Calu3 (cell line): ENCODE measurements at regions of chr10 and their contacts with region 1.

Region 1: GRCh38 chr10:28241741-28242399 is 61.0 kb downstream of the MPP7 start:
- DNase-seq: peak; percentile 53
- H3K4me3 Mint-ChIP-seq: no peak overlapping the region
- H3K27ac Mint-ChIP-seq: no peak overlapping the region
- H3K4me1 Mint-ChIP-seq: no peaks in the 10 kb centered on the region
- H3K27me3 Mint-ChIP-seq: no peaks in the 10 kb centered on the region
- CTCF ChIP-seq: peak; percentile 82

Region 2: DNA sequence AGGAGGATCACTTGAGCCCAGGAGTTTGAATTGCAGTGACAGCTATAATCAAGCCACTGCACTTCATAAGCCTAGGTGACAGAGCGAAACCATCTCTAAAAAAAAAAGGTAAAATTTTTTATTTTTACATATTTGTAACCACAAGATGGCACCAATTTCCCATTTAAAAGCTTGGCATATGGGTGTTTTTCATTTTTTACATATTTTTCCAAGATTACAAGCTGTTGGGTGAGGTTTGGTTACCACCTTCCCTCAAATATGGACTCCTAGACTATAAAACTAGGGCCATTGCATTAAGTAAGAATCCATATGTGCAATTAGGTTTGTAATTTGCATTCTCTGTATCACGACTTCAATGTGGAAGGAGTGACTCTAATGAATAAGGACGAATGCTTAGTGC is 872.0 kb before region 1 on chr10:
- CTCF ChIA-PET with region 1: interaction called, 3 read pairs
- intact Hi-C with region 1: loop called (anchors 2 kb)
- DNase-seq: no peak
- H3K4me3 Mint-ChIP-seq: no peak overlapping the region
- H3K27ac Mint-ChIP-seq: no peak overlapping the region
- H3K4me1 Mint-ChIP-seq: peaks cover 9% of the 10 kb centered on the region
- H3K27me3 Mint-ChIP-seq: no peaks in the 10 kb centered on the region
- CTCF ChIP-seq: peak; percentile 17

Region 3: GRCh38 chr10:27558612-27559020 is 683.3 kb before region 1 on chr10:
- CTCF ChIA-PET with region 1: interaction called, 3 read pairs
- intact Hi-C with region 1: loop called (anchors 2 kb)
- DNase-seq: peak; percentile 59
- H3K4me3 Mint-ChIP-seq: no peak overlapping the region
- H3K27ac Mint-ChIP-seq: no peak overlapping the region
- H3K4me1 Mint-ChIP-seq: no peaks in the 10 kb centered on the region
- H3K27me3 Mint-ChIP-seq: no peaks in the 10 kb centered on the region
- CTCF ChIP-seq: peak; percentile 58

Region 4: GRCh38 chr10:27736396-27736795 is 505.5 kb before region 1 on chr10:
- CTCF ChIA-PET with region 1: interaction called, 3 read pairs
- intact Hi-C with region 1: loop called (anchors 5 kb)
- DNase-seq: no peak
- H3K4me3 Mint-ChIP-seq: no peak overlapping the region
- H3K27ac Mint-ChIP-seq: no peak overlapping the region
- H3K4me1 Mint-ChIP-seq: no peaks in the 10 kb centered on the region
- H3K27me3 Mint-ChIP-seq: peaks cover 24% of the 10 kb centered on the region
- CTCF ChIP-seq: no peak

Region 5: GRCh38 chr10:27783660-27784059 is 458.2 kb before region 1 on chr10:
- CTCF ChIA-PET with region 1: interaction called, 10 read pairs
- intact Hi-C with region 1: loop called (anchors 1 kb)
- DNase-seq: peak; percentile 59
- H3K4me3 Mint-ChIP-seq: no peak overlapping the region
- H3K27ac Mint-ChIP-seq: no peak overlapping the region
- H3K4me1 Mint-ChIP-seq: peaks cover 8% of the 10 kb centered on the region
- H3K27me3 Mint-ChIP-seq: peaks cover 21% of the 10 kb centered on the region
- CTCF ChIP-seq: peak; percentile 40

Region 6: GRCh38 chr10:28179006-28179742 is 62.7 kb before region 1 on chr10:
- CTCF ChIA-PET with region 1: interaction called, 6 read pairs
- intact Hi-C with region 1: loop called (anchors 2 kb)
- DNase-seq: peak; percentile 57
- H3K4me3 Mint-ChIP-seq: peak overlapping the region; percentile 3
- H3K27ac Mint-ChIP-seq: peak overlapping the region; percentile 23
- H3K4me1 Mint-ChIP-seq: peaks cover 17% of the 10 kb centered on the region
- H3K27me3 Mint-ChIP-seq: no peaks in the 10 kb centered on the region
- CTCF ChIP-seq: peak; percentile 60

Region 7: GRCh38 chr10:29455095-29455494 is 1213.2 kb after region 1 on chr10:
- CTCF ChIA-PET with region 1: no interaction called
- intact Hi-C with region 1: no loop called
- DNase-seq: no peak
- H3K4me3 Mint-ChIP-seq: no peak overlapping the region
- H3K27ac Mint-ChIP-seq: no peak overlapping the region
- H3K4me1 Mint-ChIP-seq: no peaks in the 10 kb centered on the region
- H3K27me3 Mint-ChIP-seq: no peaks in the 10 kb centered on the region
- CTCF ChIP-seq: no peak